AG04450 (cell line): ENCODE measurements at regions of chr3 and their contacts with region 1.

Region 1: DNA sequence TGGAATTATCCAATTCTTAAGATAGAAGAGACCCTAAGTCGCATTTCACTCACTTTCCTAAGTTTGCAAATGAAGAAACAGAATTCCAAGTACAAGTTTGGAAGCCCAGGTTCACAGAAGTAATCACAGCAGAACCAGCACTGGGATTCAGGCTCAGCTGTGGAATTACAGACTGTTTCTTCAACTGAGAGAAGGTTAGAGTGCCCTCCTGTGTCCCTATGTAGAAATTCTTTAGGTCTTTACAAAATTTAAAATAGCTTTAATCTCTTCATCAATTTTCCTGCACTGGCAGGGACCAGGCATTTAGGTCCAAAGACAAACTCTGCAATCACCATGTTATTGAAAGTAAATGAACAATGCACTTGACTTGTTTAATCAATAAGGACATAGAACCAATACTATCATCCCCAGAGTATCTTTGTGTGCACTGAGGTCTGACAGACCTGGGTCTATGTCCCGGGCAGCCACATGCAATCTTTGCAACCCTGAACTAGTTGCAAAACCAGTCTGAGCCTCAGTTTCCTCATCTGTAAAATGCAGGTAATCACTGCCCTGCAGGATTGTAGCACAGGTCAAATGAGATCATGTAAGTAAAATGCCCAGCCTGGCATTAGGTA is 96.3 kb upstream of the ZBED2 start:
- DNase-seq: no peak
- H3K4me3 ChIP-seq: no peak overlapping the region
- H3K27ac ChIP-seq: no peak overlapping the region
- H3K27me3 ChIP-seq: peaks cover 2% of the 10 kb centered on the region
- CTCF ChIP-seq: peak; percentile 61

Region 2: GRCh38 chr3:111277226-111277625 is 414.2 kb before region 1 on chr3:
- CTCF ChIA-PET with region 1: interaction called, 10 read pairs
- POLR2A ChIA-PET with region 1: no interaction called
- DNase-seq: peak; percentile 29
- H3K4me3 ChIP-seq: no peak overlapping the region
- H3K27ac ChIP-seq: no peak overlapping the region
- H3K27me3 ChIP-seq: no peaks in the 10 kb centered on the region
- CTCF ChIP-seq: peak; percentile 50

Region 3: GRCh38 chr3:111594205-111594604 is 97.2 kb before region 1 on chr3:
- CTCF ChIA-PET with region 1: interaction called, 15 read pairs
- POLR2A ChIA-PET with region 1: no interaction called
- DNase-seq: peak; percentile 72
- H3K4me3 ChIP-seq: no peak overlapping the region
- H3K27ac ChIP-seq: peak overlapping the region; percentile 65
- H3K27me3 ChIP-seq: no peaks in the 10 kb centered on the region
- CTCF ChIP-seq: no peak

Region 4: GRCh38 chr3:111610189-111610588 is 81.2 kb before region 1 on chr3:
- CTCF ChIA-PET with region 1: no interaction called
- POLR2A ChIA-PET with region 1: no interaction called
- DNase-seq: no peak
- H3K4me3 ChIP-seq: no peak overlapping the region
- H3K27ac ChIP-seq: no peak overlapping the region
- H3K27me3 ChIP-seq: no peaks in the 10 kb centered on the region
- CTCF ChIP-seq: no peak

Region 5: GRCh38 chr3:111668912-111669488 is 22.4 kb before region 1 on chr3:
- CTCF ChIA-PET with region 1: interaction called, 100 read pairs
- POLR2A ChIA-PET with region 1: no interaction called
- DNase-seq: peak; percentile 37
- H3K4me3 ChIP-seq: no peak overlapping the region
- H3K27ac ChIP-seq: no peak overlapping the region
- H3K27me3 ChIP-seq: no peaks in the 10 kb centered on the region
- CTCF ChIP-seq: peak; percentile 76

Region 6: GRCh38 chr3:112149136-112149535 is 457.7 kb after region 1 on chr3:
- CTCF ChIA-PET with region 1: no interaction called
- POLR2A ChIA-PET with region 1: no interaction called
- DNase-seq: no peak
- H3K4me3 ChIP-seq: no peak overlapping the region
- H3K27ac ChIP-seq: no peak overlapping the region
- H3K27me3 ChIP-seq: no peaks in the 10 kb centered on the region
- CTCF ChIP-seq: no peak